Activated T-helper 1 cell treated with anti-CD3 and anti-CD28 coated beads, Interleukin-12 subunit alpha, Interleukin-12 subunit beta, Interleukin-2, Interleukin-4 antibody, amounts not matched to agents 30 ng/mL and 10 ng/mL and 1 ng/mL, durations not matched to agents 14 hours and 24 hours and 36 hours (primary cell): ENCODE measurements at regions of chr12 and their contacts with region 1.

Region 1: GRCh38 chr12:9244894-9245293 is 36.7 kb upstream of the PZP start:
- DNase-seq: no peak
- H3K4me3 Mint-ChIP-seq: peak overlapping the region; percentile 66
- H3K27ac Mint-ChIP-seq: peak overlapping the region; percentile 95
- H3K4me1 Mint-ChIP-seq: peaks cover 23% of the 10 kb centered on the region
- H3K27me3 Mint-ChIP-seq: peaks cover 2% of the 10 kb centered on the region

Region 2: DNA sequence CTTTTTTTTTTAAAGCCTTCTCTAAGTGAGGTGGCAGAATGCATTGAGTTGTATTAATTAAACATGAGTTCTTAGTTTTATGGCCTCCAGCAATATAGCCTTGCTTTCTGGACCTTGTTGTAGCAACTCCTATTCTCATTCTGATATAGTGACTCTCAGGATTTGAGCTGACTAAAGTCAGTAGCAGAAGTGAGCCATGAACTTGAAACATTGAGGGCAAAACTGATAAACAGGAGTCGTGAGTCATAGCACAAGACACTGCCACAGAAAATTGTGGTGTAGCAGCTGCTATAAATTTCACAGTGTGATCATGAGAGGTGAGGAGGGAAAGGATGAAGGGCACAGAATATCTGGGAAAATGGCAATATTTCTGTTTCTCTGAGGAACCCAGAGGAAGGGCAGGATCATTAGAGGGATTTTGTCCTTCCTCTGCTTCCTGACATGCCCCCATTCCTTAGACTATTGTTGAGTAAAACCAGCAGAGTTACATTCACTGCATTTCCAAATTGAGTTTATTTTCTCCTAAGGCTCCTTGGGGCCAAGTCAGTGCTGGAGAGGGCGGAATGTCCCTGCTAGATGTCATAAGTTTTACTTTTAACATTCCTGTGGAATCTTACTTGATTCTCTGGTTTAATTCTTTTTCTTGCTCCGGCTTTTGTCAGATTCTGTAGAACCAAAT is 248.1 kb before region 1 on chr12:
- intact Hi-C with region 1: loop called (anchors 10 kb)
- DNase-seq: peak; percentile 6
- H3K4me3 Mint-ChIP-seq: no peak overlapping the region
- H3K27ac Mint-ChIP-seq: no peak overlapping the region
- H3K4me1 Mint-ChIP-seq: peaks cover 24% of the 10 kb centered on the region
- H3K27me3 Mint-ChIP-seq: peaks cover 14% of the 10 kb centered on the region

Region 3: DNA sequence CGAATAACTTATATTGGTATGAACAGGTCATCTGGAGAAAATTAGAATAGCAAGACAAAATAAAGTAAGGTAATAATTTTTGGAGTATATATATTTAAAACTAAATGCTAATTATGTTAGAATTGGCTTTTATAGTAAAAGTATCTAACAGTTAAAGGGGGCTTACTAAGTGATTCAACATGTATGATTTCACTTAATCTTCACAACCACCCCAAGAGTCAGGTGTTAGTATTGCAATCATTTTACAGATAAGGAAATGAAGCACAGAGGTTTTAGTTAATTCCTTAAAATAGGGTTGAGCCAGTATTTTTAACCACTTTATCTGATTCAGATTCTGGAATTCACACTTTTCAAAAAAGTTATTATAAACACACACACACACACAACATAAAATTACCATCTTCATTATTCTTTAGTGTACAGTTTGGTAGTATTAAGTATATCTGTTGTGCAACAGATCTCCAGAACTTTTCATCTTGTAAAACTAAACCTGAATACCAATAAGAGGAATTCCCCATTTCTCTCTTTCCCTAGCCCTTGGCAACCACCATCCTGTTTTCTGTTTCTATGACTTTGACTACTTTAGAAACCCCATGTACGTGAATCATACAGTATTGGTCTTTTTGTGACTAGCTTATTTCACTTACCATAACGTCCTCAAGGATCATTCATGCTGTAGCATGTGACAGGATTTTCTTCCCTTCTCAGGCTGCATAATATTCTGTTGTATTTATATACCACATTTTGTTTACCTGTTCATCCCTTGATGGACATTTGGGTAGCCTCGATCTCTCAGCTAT is 141.6 kb before region 1 on chr12:
- intact Hi-C with region 1: loop called (anchors 5 kb)
- DNase-seq: no peak
- H3K4me3 Mint-ChIP-seq: no peak overlapping the region
- H3K27ac Mint-ChIP-seq: no peak overlapping the region
- H3K4me1 Mint-ChIP-seq: peaks cover 7% of the 10 kb centered on the region
- H3K27me3 Mint-ChIP-seq: no peaks in the 10 kb centered on the region

Region 4: DNA sequence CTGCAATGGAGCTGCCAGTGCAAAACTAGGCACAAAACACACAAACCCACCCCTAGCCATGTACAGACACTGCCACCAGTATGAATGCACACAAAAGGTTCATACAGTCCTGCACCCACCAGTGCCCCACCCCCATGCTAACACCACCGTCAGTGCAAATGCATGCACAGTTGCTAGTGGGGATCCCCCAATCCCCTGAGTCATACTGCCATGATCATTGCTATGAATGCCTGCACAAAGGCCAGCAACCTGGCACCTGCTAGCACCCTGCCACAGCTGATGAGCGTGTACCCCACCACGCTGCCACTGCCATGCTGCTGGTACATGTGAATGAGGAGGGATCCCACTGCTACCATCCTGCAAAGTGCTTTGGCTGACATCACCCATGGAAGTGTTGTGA is 60.6 kb before region 1 on chr12:
- intact Hi-C with region 1: no loop called
- DNase-seq: no peak
- H3K4me3 Mint-ChIP-seq: no peak overlapping the region
- H3K27ac Mint-ChIP-seq: no peak overlapping the region
- H3K4me1 Mint-ChIP-seq: no peaks in the 10 kb centered on the region
- H3K27me3 Mint-ChIP-seq: peaks cover 4% of the 10 kb centered on the region

Region 5: DNA sequence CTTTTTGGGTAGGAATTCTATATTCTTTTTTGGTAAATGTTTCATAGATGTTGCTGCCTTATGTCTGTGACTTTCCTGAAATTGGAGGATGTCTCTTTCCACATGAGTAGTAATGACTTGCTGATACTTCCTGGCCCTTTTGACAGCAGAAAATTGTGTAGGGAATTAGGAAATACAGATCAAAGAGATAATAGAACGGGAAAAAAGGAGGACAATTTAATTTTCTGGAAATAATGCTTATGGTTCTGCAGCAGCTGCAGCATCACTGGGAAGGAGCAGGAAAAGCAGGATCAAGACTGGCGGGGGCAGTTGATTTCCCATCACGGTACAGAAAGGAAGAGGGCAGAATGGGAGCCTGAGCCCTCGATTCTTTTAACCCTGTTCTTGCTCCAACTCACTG is 32.1 kb after region 1 on chr12:
- intact Hi-C with region 1: loop called (anchors 5 kb)
- DNase-seq: no peak
- H3K4me3 Mint-ChIP-seq: no peak overlapping the region
- H3K27ac Mint-ChIP-seq: no peak overlapping the region
- H3K4me1 Mint-ChIP-seq: no peaks in the 10 kb centered on the region
- H3K27me3 Mint-ChIP-seq: peaks cover 25% of the 10 kb centered on the region

Region 6: DNA sequence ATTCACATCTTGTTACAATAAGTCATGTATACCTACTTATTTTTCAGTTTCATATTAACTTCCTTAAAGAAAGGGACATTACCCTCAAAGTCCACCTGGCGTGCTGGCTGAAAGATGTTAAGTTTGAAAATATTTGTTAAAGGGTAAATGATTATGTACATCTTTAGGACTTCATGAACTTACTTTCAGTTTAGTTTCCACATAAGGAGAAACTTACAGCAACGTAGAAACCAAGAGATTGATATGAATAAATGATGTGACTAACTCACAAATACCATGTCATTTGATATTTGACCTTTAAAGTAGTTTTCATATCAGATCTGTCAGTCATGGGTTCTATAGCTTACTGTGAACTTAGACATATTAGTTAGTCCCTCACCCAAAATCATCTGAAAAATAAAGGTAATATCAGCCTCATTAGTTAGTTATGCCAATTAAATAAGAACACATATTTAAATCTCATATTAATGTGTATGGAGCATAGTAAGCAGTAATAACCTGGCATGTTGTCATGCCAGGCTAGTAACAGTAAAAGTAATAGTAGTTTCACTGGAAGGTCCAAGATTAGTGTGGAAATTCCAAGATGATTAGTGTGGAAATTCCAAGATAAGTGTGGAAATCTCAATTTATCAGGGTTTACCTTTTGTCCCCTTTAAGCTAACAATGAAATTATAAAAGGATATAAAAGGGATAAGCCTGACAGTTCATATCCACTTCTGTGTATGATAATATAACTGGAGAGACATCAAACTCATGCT is 422.7 kb after region 1 on chr12:
- intact Hi-C with region 1: loop called (anchors 1 kb)
- DNase-seq: no peak
- H3K4me3 Mint-ChIP-seq: peak overlapping the region; percentile 90
- H3K27ac Mint-ChIP-seq: peak overlapping the region; percentile 97
- H3K4me1 Mint-ChIP-seq: peaks cover 60% of the 10 kb centered on the region
- H3K27me3 Mint-ChIP-seq: no peaks in the 10 kb centered on the region

Region 7: GRCh38 chr12:9732921-9733461 is 488.1 kb after region 1 on chr12 and contains the start of gene CLECL1:
- intact Hi-C with region 1: loop called (anchors 2 kb)
- DNase-seq: no peak
- H3K4me3 Mint-ChIP-seq: peak within 1 kb of the TSS; percentile 87
- H3K27ac Mint-ChIP-seq: peak within 1 kb of the TSS; percentile 89
- H3K4me1 Mint-ChIP-seq: peaks cover 76% of the 10 kb centered on the region
- H3K27me3 Mint-ChIP-seq: no peaks in the 10 kb centered on the region
- total RNA-seq, gene CLECL1: 7.6 and 9.1 TPM in 2 replicates